ENCODE measurements at regions of chr3 and their contacts with region 1.

Region 1: DNA sequence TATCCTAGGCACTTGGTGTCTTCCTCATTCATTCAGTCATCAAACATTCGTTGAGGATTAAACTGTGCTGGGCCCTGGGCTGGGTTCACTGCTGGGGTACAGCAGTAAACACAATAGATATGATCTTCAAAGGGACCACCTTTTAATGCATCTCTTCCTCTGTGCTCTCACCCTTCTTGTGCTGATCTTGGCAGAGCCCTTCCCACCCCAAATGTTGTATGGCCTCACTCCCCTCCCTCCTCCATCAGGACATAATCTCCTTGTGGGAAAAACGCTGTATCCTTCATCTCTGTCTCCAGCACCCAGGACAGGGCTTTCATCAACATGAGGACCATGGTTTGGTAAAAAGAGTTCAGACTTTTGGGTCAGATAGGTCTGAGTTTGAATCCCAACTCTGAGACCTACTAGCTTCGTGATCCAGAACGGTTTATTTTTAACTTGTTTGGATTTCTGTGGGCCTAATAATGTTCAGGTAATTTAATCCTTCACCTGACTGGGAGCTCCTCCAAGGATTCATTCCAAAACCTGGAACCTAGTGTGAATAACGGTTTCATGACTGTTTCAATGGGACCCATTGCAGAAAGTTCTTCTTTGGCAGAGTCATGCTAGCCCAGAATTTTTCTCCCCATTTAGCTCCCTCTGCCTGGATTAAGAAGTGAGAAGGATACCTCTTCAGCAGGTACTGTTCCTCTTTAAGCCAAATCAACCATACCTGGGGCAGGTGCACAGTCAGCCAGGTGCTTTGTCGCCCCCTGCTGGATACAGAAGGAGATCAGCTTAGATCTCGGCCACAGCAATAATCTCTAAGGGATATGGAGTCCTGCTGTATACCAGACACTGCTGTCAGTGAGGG is 5.2 kb upstream of the WNT7A start:
- DNase-seq: peak in 1 of 2 experiments; percentile 82
- H3K4me3 ChIP-seq: no peak overlapping the region
- H3K27ac ChIP-seq: no peak overlapping the region
- H3K4me1 ChIP-seq: peaks cover 0 to 6% (median 0%) of the 10 kb centered on the region in 4 experiments; a peak in 3 of 7 replicates
- H3K27me3 ChIP-seq: peaks cover 15 to 38% (median 23%) of the 10 kb centered on the region in 4 experiments
- CTCF ChIP-seq: peak; percentile 81 to 93 (median 93)
- EP300 ChIP-seq: no peak
- POLR2A ChIP-seq: no peak
- RAD21 ChIP-seq: peak; percentile 93 to 96

Region 2: DNA sequence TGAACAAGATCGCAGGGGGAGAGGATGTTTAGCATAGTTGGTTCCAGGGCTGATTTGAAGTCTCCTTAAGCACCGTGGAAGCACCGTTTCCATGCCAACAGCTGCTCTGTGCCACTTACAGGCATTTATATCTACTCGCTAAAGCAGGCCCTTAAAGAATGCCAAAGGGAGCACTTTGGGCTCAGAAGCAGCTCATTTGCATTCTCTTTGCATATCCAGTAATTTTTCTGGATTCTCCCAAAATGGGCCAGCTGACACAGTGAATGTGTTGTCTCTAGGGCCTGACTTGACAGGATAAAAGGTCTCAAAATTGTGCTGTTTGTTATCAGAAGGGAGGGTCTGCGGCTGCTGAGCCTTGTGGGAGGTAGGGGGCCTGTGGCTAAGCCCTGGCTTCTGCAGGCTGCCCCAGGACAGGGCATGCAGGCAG is 197.5 kb before region 1 on chr3:
- CTCF ChIA-PET with region 1: interaction called, 18 read pairs
- POLR2A ChIA-PET with region 1: no interaction called
- DNase-seq: no peak
- H3K4me3 ChIP-seq: no peak overlapping the region
- H3K27ac ChIP-seq: no peak overlapping the region
- H3K4me1 ChIP-seq: peaks cover 2 to 15% (median 8%) of the 10 kb centered on the region in 4 experiments; a peak in 6 of 7 replicates
- H3K27me3 ChIP-seq: peaks cover 0 to 2% (median under 1%) of the 10 kb centered on the region in 4 experiments; a peak in 3 of 7 replicates
- CTCF ChIP-seq: no peak
- EP300 ChIP-seq: no peak
- POLR2A ChIP-seq: no peak
- RAD21 ChIP-seq: no peak

Region 3: DNA sequence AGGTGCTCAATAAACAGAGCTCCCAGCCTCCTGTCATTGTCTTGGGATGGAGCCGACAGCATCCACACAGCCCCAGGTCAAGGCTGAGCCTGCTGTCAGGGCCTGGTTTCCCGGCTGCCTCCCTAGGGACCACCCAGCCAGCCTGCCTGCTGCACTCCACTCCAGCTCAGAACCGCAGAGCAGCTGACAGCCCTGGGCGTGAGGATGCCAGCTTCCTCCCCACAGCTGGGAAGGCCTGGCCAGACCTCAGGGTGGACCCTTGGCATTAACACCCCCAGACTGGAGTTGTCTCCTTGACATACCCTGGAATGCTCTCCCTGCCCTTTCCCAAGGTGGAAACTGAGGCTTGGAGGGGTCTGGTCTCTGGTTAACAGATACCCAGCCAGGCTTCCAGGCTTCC is 117.2 kb before region 1 on chr3:
- CTCF ChIA-PET with region 1: interaction called, 13 read pairs
- POLR2A ChIA-PET with region 1: no interaction called
- DNase-seq: no peak
- H3K4me3 ChIP-seq: no peak overlapping the region
- H3K27ac ChIP-seq: no peak overlapping the region
- H3K4me1 ChIP-seq: peaks cover 0 to 10% (median 4%) of the 10 kb centered on the region in 4 experiments; a peak in 5 of 7 replicates
- H3K27me3 ChIP-seq: no peaks in the 10 kb centered on the region
- CTCF ChIP-seq: no peak
- EP300 ChIP-seq: no peak
- POLR2A ChIP-seq: no peak
- RAD21 ChIP-seq: no peak

Region 4: GRCh38 chr3:13795816-13796215 is 89.3 kb before region 1 on chr3:
- CTCF ChIA-PET with region 1: interaction called, 16 read pairs
- POLR2A ChIA-PET with region 1: no interaction called
- DNase-seq: no peak
- H3K4me3 ChIP-seq: no peak overlapping the region
- H3K27ac ChIP-seq: no peak overlapping the region
- H3K4me1 ChIP-seq: peaks cover 0 to 10% (median 0%) of the 10 kb centered on the region in 4 experiments; a peak in 2 of 7 replicates
- H3K27me3 ChIP-seq: peaks cover 0 to 3% (median 0%) of the 10 kb centered on the region in 4 experiments; a peak in 1 of 7 replicates
- CTCF ChIP-seq: no peak
- EP300 ChIP-seq: no peak
- POLR2A ChIP-seq: no peak
- RAD21 ChIP-seq: no peak

Region 5: GRCh38 chr3:13850158-13850945 is 34.7 kb before region 1 on chr3:
- CTCF ChIA-PET with region 1: interaction called, 22 read pairs
- POLR2A ChIA-PET with region 1: no interaction called
- DNase-seq: peak in 1 of 2 experiments; percentile 68
- H3K4me3 ChIP-seq: no peak overlapping the region
- H3K27ac ChIP-seq: no peak overlapping the region
- H3K4me1 ChIP-seq: peaks cover 0 to 19% (median 4%) of the 10 kb centered on the region in 4 experiments; a peak in 2 of 7 replicates
- H3K27me3 ChIP-seq: no peaks in the 10 kb centered on the region
- CTCF ChIP-seq: no peak
- EP300 ChIP-seq: no peak
- POLR2A ChIP-seq: no peak
- RAD21 ChIP-seq: no peak

Region 6: GRCh38 chr3:13872451-13872850 is 12.6 kb before region 1 on chr3:
- CTCF ChIA-PET with region 1: interaction called, 17 read pairs
- POLR2A ChIA-PET with region 1: no interaction called
- DNase-seq: no peak
- H3K4me3 ChIP-seq: no peak overlapping the region
- H3K27ac ChIP-seq: no peak overlapping the region
- H3K4me1 ChIP-seq: peaks cover 2 to 15% (median 9%) of the 10 kb centered on the region in 4 experiments; a peak in 6 of 7 replicates
- H3K27me3 ChIP-seq: peaks cover 16 to 42% (median 22%) of the 10 kb centered on the region in 4 experiments
- CTCF ChIP-seq: no peak
- EP300 ChIP-seq: no peak
- POLR2A ChIP-seq: no peak
- RAD21 ChIP-seq: no peak; a peak in 1 of 4 replicates

Measured in H1 (cell line).